ENCODE measurements at regions of chr9 and their contacts with region 1.

Region 1: DNA sequence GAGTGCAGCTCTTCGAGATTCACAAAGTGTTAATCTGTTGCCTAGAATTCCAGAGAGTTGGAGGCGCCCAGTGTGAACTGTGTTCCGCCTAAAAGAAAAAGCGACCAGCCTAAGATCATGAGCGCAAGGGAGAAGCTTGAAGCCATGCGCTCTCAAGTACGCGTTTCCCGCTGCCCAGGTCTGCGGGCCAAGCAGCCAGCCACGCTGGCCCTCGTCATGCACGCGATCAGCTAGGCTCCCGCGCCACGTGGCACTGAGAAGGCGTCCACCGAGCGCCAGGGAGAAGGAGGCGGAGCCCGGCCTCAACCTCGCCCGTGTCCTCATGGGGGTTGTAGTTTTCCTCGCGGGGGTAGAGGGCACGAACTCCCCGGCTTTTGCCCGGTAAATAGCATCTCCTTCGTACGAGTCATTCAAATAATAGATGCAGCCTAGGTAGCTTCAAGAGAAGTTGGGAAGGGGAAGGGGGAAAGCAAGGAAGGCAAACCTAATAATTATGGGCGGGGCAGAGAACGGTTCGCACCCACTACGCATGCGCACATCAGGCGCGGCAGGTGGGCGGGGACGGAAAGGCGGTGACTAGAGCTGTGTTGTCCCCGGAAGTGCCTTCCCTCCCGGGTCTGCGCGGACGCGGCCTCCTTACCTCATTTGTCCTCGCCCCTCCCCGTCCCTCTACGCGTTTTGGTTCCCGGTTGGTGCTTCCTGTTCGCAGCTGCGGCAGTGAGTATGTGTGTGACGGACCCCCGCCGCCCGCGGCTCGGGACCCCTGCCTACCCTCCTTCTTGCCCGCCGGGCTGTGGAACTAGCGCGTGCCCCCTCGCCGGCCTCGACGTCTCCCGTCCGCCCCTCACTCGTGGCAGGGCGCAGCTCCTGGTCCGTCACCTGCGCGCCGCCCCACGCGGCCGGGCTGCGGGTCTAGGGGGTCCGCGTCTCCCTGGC is at the start of gene ZCCHC7:
- DNase-seq: peak; percentile 95 to 98 (median 97)
- ATAC-seq: peak; percentile 94
- H3K4me3 ChIP-seq: peak within 1 kb of the TSS; percentile 66 to 77
- H3K4me3 Mint-ChIP-seq: peak within 1 kb of the TSS; percentile 97
- H3K27ac ChIP-seq: peak within 1 kb of the TSS; percentile 89 to 97
- H3K27ac Mint-ChIP-seq: peak within 1 kb of the TSS; percentile 98
- H3K4me1 ChIP-seq: peaks cover 23% of the 10 kb centered on the region
- H3K4me1 Mint-ChIP-seq: peaks cover 41% of the 10 kb centered on the region
- H3K27me3 ChIP-seq: no peaks in the 10 kb centered on the region
- H3K27me3 Mint-ChIP-seq: no peaks in the 10 kb centered on the region
- CTCF ChIP-seq: no peak
- total RNA-seq, gene ZCCHC7: 35.2 to 39.5 TPM

Region 2: GRCh38 chr9:37027582-37028419 is 92.4 kb before region 1 on chr9:
- CTCF ChIA-PET with region 1: no interaction called
- POLR2A ChIA-PET with region 1: interaction called, 3 read pairs
- intact Hi-C with region 1: loop called (anchors 2 kb)
- DNase-seq: peak; percentile 63 to 89 (median 81)
- ATAC-seq: peak; percentile 95
- H3K4me3 ChIP-seq: peak overlapping the region; percentile 35 to 44
- H3K4me3 Mint-ChIP-seq: peak overlapping the region; percentile 53
- H3K27ac ChIP-seq: no peak overlapping the region
- H3K27ac Mint-ChIP-seq: no peak overlapping the region
- H3K4me1 ChIP-seq: peaks cover 54% of the 10 kb centered on the region
- H3K4me1 Mint-ChIP-seq: peaks cover 45% of the 10 kb centered on the region
- H3K27me3 ChIP-seq: peaks cover 64 to 71% of the 10 kb centered on the region in 2 experiments
- H3K27me3 Mint-ChIP-seq: peaks cover 80% of the 10 kb centered on the region
- CTCF ChIP-seq: no peak

Region 3: GRCh38 chr9:37107701-37108100 is 12.5 kb before region 1 on chr9:
- CTCF ChIA-PET with region 1: no interaction called
- POLR2A ChIA-PET with region 1: no interaction called
- intact Hi-C with region 1: no loop called
- DNase-seq: peak in 2 of 9 experiments; percentile 15 to 49
- ATAC-seq: peak; percentile 40
- H3K4me3 ChIP-seq: peak overlapping the region in 1 of 2 experiments; percentile 18
- H3K4me3 Mint-ChIP-seq: peak overlapping the region; percentile 64
- H3K27ac ChIP-seq: no peak overlapping the region
- H3K27ac Mint-ChIP-seq: no peak overlapping the region
- H3K4me1 ChIP-seq: peaks cover 15% of the 10 kb centered on the region
- H3K4me1 Mint-ChIP-seq: peaks cover 23% of the 10 kb centered on the region
- H3K27me3 ChIP-seq: peaks cover 0 to 3% of the 10 kb centered on the region in 2 experiments
- H3K27me3 Mint-ChIP-seq: peaks cover 7% of the 10 kb centered on the region
- CTCF ChIP-seq: no peak

Region 4: GRCh38 chr9:37144762-37145161 is 24.6 kb after region 1 on chr9:
- CTCF ChIA-PET with region 1: interaction called, 3 read pairs
- POLR2A ChIA-PET with region 1: interaction called, 16 read pairs
- intact Hi-C with region 1: loop called (anchors 1 to 2 kb)
- DNase-seq: no peak
- ATAC-seq: no peak
- H3K4me3 ChIP-seq: no peak overlapping the region
- H3K4me3 Mint-ChIP-seq: peak overlapping the region; percentile 29
- H3K27ac ChIP-seq: peak overlapping the region in 1 of 2 experiments; percentile 22
- H3K27ac Mint-ChIP-seq: peak overlapping the region; percentile 85
- H3K4me1 ChIP-seq: peaks cover 36% of the 10 kb centered on the region
- H3K4me1 Mint-ChIP-seq: peaks cover 63% of the 10 kb centered on the region
- H3K27me3 ChIP-seq: no peaks in the 10 kb centered on the region
- H3K27me3 Mint-ChIP-seq: no peaks in the 10 kb centered on the region
- CTCF ChIP-seq: no peak

Region 5: DNA sequence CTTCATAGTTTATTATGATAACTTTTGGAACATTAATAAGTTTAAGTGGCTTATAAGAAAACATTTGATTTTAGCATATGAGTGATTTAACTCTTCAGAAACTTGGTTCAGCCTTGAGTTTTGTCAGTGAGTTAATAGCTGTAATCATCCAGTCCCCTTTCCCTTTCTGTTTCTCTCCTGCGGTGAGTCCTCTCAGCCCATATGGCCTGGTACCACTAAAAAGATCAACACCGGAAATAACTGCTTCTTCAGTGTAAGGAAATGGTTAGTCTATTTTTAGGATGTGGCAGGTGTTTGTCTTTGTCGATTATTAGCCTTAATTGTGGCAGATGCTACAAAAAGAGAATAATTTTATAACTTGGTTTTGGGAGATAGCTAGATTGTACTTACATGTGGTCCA is 182.1 kb after region 1 on chr9:
- CTCF ChIA-PET with region 1: interaction called, 3 read pairs
- POLR2A ChIA-PET with region 1: interaction called, 6 read pairs
- intact Hi-C with region 1: loop called in 1 of 2 experiments (anchors 2 kb)
- DNase-seq: peak in 3 of 9 experiments; percentile 46 to 82 (median 65)
- ATAC-seq: peak; percentile 93
- H3K4me3 ChIP-seq: no peak overlapping the region
- H3K4me3 Mint-ChIP-seq: peak overlapping the region; percentile 66
- H3K27ac ChIP-seq: peak overlapping the region in 1 of 2 experiments; percentile 49
- H3K27ac Mint-ChIP-seq: peak overlapping the region; percentile 34
- H3K4me1 ChIP-seq: peaks cover 37% of the 10 kb centered on the region
- H3K4me1 Mint-ChIP-seq: peaks cover 70% of the 10 kb centered on the region
- H3K27me3 ChIP-seq: no peaks in the 10 kb centered on the region
- H3K27me3 Mint-ChIP-seq: no peaks in the 10 kb centered on the region
- CTCF ChIP-seq: no peak

Region 6: GRCh38 chr9:37422289-37423104 is 302.3 kb after region 1 on chr9 and contains the start of gene GRHPR:
- CTCF ChIA-PET with region 1: no interaction called
- POLR2A ChIA-PET with region 1: no interaction called
- intact Hi-C with region 1: loop called in 1 of 2 experiments (anchors 5 kb)
- DNase-seq: peak; percentile 73 to 94 (median 88)
- ATAC-seq: peak; percentile 98
- H3K4me3 ChIP-seq: peak within 1 kb of the TSS; percentile 90 to 96
- H3K4me3 Mint-ChIP-seq: peak within 1 kb of the TSS; percentile 96
- H3K27ac ChIP-seq: peak within 1 kb of the TSS; percentile 76 to 82
- H3K27ac Mint-ChIP-seq: peak within 1 kb of the TSS; percentile 93
- H3K4me1 ChIP-seq: peaks cover 20% of the 10 kb centered on the region
- H3K4me1 Mint-ChIP-seq: peaks cover 28% of the 10 kb centered on the region
- H3K27me3 ChIP-seq: no peaks in the 10 kb centered on the region
- H3K27me3 Mint-ChIP-seq: no peaks in the 10 kb centered on the region
- CTCF ChIP-seq: no peak
- total RNA-seq, gene GRHPR: 25.5 to 25.8 TPM

Region 7: GRCh38 chr9:37465249-37466036 is 345.3 kb after region 1 on chr9 and contains the start of gene ZBTB5:
- CTCF ChIA-PET with region 1: no interaction called
- POLR2A ChIA-PET with region 1: no interaction called
- intact Hi-C with region 1: loop called in 1 of 2 experiments (anchors 1 kb)
- DNase-seq: peak; percentile 97 to 100 (median 99)
- ATAC-seq: peak; percentile 79
- H3K4me3 ChIP-seq: peak within 1 kb of the TSS; percentile 91 to 97
- H3K4me3 Mint-ChIP-seq: peak within 1 kb of the TSS; percentile 95
- H3K27ac ChIP-seq: peak within 1 kb of the TSS; percentile 86 to 97
- H3K27ac Mint-ChIP-seq: peak within 1 kb of the TSS; percentile 98
- H3K4me1 ChIP-seq: peaks cover 23% of the 10 kb centered on the region
- H3K4me1 Mint-ChIP-seq: peaks cover 40% of the 10 kb centered on the region
- H3K27me3 ChIP-seq: no peaks in the 10 kb centered on the region
- H3K27me3 Mint-ChIP-seq: no peaks in the 10 kb centered on the region
- CTCF ChIP-seq: no peak
- total RNA-seq, gene ZBTB5: 18.5 to 18.7 TPM

Measured in CD8-positive, alpha-beta T cell (primary cell).